ENCODE measurements at regions of chr9 and their contacts with region 1.

Region 1: GRCh38 chr9:21096172-21096900 is 18.6 kb upstream of the IFNB1 start:
- DNase-seq: no peak
- ATAC-seq: peak; percentile 88
- H3K4me3 Mint-ChIP-seq: peak overlapping the region; percentile 74
- H3K27ac Mint-ChIP-seq: peak overlapping the region; percentile 89
- H3K4me1 Mint-ChIP-seq: peaks cover 40% of the 10 kb centered on the region
- H3K27me3 Mint-ChIP-seq: no peaks in the 10 kb centered on the region

Region 2: DNA sequence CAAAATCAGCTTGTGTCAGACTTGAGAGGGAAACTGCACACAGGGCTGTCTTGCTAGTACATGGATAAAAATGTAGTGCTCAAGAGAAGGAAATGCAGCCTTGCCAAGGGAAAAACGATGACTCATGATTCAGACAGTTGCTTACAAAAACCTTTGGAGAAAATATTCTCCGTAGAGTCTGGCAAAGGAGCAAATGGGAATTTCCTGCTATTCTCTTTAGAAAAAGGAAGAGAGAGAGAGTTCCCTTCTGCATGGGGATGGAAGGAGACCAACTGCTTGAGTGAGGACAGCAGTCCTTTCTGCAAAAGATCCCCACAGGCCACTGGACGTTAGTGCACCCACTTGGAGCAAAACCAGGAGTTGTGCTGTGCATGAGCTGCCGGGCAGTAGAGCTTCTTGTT is 26.2 kb before region 1 on chr9:
- POLR2A ChIA-PET with region 1: no interaction called
- DNase-seq: no peak
- ATAC-seq: no peak
- H3K4me3 Mint-ChIP-seq: no peak overlapping the region
- H3K27ac Mint-ChIP-seq: no peak overlapping the region
- H3K4me1 Mint-ChIP-seq: peaks cover 6% of the 10 kb centered on the region
- H3K27me3 Mint-ChIP-seq: peaks cover 7% of the 10 kb centered on the region

Region 3: GRCh38 chr9:21081999-21082398 is 14.3 kb before region 1 on chr9:
- POLR2A ChIA-PET with region 1: interaction called, 11 read pairs
- DNase-seq: no peak
- ATAC-seq: peak; percentile 61
- H3K4me3 Mint-ChIP-seq: peak overlapping the region; percentile 77
- H3K27ac Mint-ChIP-seq: peak overlapping the region; percentile 76
- H3K4me1 Mint-ChIP-seq: peaks cover 34% of the 10 kb centered on the region
- H3K27me3 Mint-ChIP-seq: no peaks in the 10 kb centered on the region

Region 4: DNA sequence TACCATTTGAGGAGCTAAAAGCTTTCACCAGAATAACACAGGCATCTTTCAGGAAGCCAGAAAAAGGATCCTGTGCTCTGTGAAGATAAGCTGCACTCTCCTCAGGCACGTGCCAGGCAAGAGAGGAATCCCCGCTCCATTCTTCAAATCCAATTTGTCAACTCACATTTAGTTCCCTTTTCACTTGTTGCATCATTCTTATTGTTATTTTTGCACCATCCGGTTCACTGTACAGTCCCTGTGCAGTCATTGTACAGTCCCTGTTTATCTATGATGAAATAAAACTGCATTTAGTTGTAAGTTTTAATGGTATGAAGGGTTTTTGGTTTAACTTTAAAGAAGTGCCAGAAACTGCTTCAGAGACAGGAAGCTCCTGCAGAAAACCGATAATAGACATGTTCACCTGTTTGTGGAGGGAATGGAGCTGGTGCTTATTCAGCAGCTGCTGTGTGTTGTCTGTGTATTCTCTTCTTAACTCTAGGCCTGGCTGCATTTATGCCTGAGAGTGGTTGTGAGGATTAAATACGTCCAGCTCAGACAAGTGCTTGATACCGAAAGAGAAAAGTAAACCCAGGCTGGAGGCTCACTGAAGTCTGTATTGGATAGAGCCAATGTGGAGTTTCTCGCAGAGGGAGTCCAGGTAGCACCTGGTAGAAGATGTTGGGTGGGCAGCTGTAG is 22.9 kb after region 1 on chr9:
- POLR2A ChIA-PET with region 1: no interaction called
- DNase-seq: no peak
- ATAC-seq: no peak
- H3K4me3 Mint-ChIP-seq: no peak overlapping the region
- H3K27ac Mint-ChIP-seq: no peak overlapping the region
- H3K4me1 Mint-ChIP-seq: peaks cover 14% of the 10 kb centered on the region
- H3K27me3 Mint-ChIP-seq: peaks cover 53% of the 10 kb centered on the region